ENCODE measurements at regions of chr2 and their contacts with region 1.

Region 1: GRCh38 chr2:38535744-38536506 is 66.8 kb downstream of the HNRNPLL start:
- DNase-seq: peak; percentile 85
- H3K4me3 Mint-ChIP-seq: peak overlapping the region; percentile 59
- H3K27ac Mint-ChIP-seq: no peak overlapping the region
- H3K4me1 Mint-ChIP-seq: peaks cover 6% of the 10 kb centered on the region
- H3K27me3 Mint-ChIP-seq: no peaks in the 10 kb centered on the region

Region 2: DNA sequence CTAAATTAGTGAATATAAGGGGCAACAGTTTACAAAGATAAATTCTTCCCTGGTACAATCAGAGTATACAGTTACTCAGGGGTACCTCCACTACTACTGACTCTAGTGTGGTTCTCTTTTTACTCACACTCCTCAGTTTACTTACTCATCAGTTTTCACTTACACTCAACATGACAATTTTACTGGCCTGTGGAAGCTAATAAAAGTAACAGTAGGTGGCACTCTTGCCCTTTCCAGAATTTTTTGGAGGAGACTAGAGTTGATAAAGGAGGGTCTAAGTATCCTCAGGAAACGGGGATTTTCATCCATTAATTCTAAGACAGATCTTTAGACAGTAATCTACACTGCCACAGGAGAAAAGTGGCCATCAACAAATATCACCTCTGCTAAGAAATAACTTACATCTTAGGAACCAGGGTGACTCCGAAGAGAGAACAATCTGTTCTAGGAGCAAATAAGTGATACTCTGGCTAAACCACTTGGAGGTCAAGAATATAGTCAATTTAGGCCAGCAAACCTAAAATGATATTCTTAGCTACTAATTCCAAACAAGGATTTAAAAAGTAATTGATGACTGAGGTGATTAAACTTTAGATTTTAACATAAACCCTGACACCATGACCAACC is 220.1 kb before region 1 on chr2:
- CTCF ChIA-PET with region 1: interaction called, 16 read pairs
- POLR2A ChIA-PET with region 1: no interaction called
- intact Hi-C with region 1: no loop called
- DNase-seq: no peak
- H3K4me3 Mint-ChIP-seq: no peak overlapping the region
- H3K27ac Mint-ChIP-seq: no peak overlapping the region
- H3K4me1 Mint-ChIP-seq: peaks cover 13% of the 10 kb centered on the region
- H3K27me3 Mint-ChIP-seq: no peaks in the 10 kb centered on the region

Region 3: DNA sequence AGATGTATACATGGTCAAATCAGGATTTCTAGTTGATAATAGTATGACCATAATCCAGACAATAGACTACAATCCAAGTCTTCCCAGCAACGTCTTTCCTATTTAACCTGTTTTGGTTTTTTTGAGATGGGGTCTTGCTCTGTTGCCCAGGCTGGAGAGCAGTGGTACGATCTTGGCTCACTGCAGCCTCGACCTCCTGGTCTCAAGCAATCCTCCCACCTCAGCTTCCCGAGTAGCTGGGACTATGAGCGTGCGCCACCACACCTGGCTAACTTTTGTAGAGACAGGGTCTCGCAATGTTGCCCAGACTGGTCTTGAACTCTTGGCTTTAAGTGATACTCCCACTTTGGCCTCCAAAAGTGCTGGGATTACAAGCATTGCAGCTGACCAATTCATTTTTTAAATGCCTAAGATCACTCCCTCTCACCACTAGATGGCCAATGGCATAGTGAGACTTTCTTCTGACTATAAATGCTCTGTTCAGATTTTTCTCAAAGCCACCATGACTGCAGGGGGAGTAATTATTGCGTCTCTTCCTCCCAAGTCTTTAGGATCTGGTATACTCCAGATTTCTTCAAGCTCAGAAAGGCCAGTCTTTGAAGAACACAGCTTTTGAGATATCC is 19.2 kb after region 1 on chr2:
- CTCF ChIA-PET with region 1: interaction called, 14 read pairs
- POLR2A ChIA-PET with region 1: no interaction called
- intact Hi-C with region 1: no loop called
- DNase-seq: no peak
- H3K4me3 Mint-ChIP-seq: no peak overlapping the region
- H3K27ac Mint-ChIP-seq: no peak overlapping the region
- H3K4me1 Mint-ChIP-seq: peaks cover 15% of the 10 kb centered on the region
- H3K27me3 Mint-ChIP-seq: no peaks in the 10 kb centered on the region

Region 4: DNA sequence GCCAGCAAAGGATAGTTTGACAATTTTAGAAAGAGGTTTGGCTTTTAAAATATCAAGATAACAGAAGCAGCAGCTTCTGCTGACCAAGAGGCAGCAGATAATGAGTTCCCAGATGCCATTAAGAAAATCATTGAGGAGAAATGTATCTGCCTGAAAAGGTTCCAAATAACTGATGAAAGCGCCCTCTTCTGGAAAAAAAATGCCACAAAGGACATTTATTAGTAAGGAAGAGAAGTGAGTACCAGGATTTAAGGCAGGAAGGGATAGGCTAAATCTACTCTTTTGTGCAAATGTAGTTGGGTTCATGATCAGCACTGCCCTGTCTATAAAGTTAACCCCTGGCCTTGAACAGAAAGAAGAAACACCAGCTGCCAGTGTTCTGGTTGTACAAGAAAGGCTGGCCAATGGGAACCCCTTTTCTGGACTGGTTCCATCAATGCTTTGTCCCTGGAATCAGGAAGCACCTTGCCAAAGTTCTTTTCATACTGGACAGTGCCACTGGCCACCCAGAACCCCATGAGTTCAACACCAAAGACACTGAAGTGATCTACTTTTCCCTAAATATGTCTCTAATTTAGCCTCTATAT is 299.2 kb after region 1 on chr2:
- CTCF ChIA-PET with region 1: interaction called, 3 read pairs
- POLR2A ChIA-PET with region 1: no interaction called
- intact Hi-C with region 1: loop called (anchors 10 kb)
- DNase-seq: no peak
- H3K4me3 Mint-ChIP-seq: no peak overlapping the region
- H3K27ac Mint-ChIP-seq: no peak overlapping the region
- H3K4me1 Mint-ChIP-seq: no peaks in the 10 kb centered on the region
- H3K27me3 Mint-ChIP-seq: no peaks in the 10 kb centered on the region

Region 5: GRCh38 chr2:39227628-39228412 is 691.9 kb after region 1 on chr2:
- CTCF ChIA-PET with region 1: no interaction called
- POLR2A ChIA-PET with region 1: no interaction called
- intact Hi-C with region 1: loop called (anchors 10 kb)
- DNase-seq: peak; percentile 87
- H3K4me3 Mint-ChIP-seq: peak overlapping the region; percentile 56
- H3K27ac Mint-ChIP-seq: peak overlapping the region; percentile 59
- H3K4me1 Mint-ChIP-seq: peaks cover 36% of the 10 kb centered on the region
- H3K27me3 Mint-ChIP-seq: no peaks in the 10 kb centered on the region

Measured in activated CD4-positive, alpha-beta memory T cell treated with anti-CD3 and anti-CD28 coated beads for 36 hours (primary cell).